Activated T-helper 1 cell treated with anti-CD3 and anti-CD28 coated beads, Interleukin-12 subunit alpha, Interleukin-12 subunit beta, Interleukin-2, Interleukin-4 antibody, amounts not matched to agents 30 ng/mL and 10 ng/mL and 1 ng/mL, durations not matched to agents 14 hours and 24 hours and 36 hours (primary cell): ENCODE measurements at regions of chr11 and their contacts with region 1.

Region 1: GRCh38 chr11:86218125-86219084 is 26.1 kb upstream of the EED start:
- DNase-seq: peak; percentile 42
- H3K4me3 Mint-ChIP-seq: peak overlapping the region; percentile 40
- H3K27ac Mint-ChIP-seq: peak overlapping the region; percentile 81
- H3K4me1 Mint-ChIP-seq: peaks cover 81% of the 10 kb centered on the region
- H3K27me3 Mint-ChIP-seq: no peaks in the 10 kb centered on the region

Region 2: DNA sequence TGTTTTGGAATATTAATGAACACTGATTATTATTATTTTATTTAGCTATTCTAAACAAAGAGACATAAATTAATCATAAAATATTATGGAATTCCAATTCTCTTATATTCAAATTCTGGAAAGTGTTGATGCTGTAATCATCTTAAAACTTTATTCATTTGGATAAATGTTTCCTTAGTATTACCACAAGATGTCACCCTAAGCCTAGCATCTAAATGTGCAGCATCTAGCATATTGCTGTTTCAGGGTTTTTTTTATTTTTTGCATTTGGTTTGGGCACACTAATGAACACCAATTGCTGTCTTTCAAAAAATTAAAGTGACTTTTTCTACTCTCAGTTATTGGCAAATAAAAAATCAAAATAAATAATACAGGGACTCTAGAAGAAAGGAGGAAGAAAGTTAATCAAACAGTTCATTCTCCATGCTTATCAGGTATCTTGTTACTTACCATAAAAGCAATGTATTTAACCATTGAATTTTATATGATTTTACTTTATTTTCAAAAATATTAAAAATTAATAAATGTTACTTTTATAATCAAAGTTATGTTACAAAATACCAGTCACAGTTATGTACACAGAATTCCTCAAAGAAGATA is 623.0 kb before region 1 on chr11:
- intact Hi-C with region 1: loop called (anchors 10 kb)
- DNase-seq: no peak
- H3K4me3 Mint-ChIP-seq: no peak overlapping the region
- H3K27ac Mint-ChIP-seq: no peak overlapping the region
- H3K4me1 Mint-ChIP-seq: no peaks in the 10 kb centered on the region
- H3K27me3 Mint-ChIP-seq: peaks cover 6% of the 10 kb centered on the region

Region 3: GRCh38 chr11:85766721-85767161 is 451.7 kb before region 1 on chr11:
- intact Hi-C with region 1: loop called (anchors 5 kb)
- DNase-seq: no peak
- H3K4me3 Mint-ChIP-seq: no peak overlapping the region
- H3K27ac Mint-ChIP-seq: no peak overlapping the region
- H3K4me1 Mint-ChIP-seq: peaks cover 84% of the 10 kb centered on the region
- H3K27me3 Mint-ChIP-seq: no peaks in the 10 kb centered on the region

Region 4: GRCh38 chr11:86041975-86042378 is 176.4 kb before region 1 on chr11:
- intact Hi-C with region 1: loop called (anchors 1 kb)
- DNase-seq: peak; percentile 48
- H3K4me3 Mint-ChIP-seq: peak overlapping the region; percentile 43
- H3K27ac Mint-ChIP-seq: peak overlapping the region; percentile 71
- H3K4me1 Mint-ChIP-seq: peaks cover 63% of the 10 kb centered on the region
- H3K27me3 Mint-ChIP-seq: no peaks in the 10 kb centered on the region

Region 5: DNA sequence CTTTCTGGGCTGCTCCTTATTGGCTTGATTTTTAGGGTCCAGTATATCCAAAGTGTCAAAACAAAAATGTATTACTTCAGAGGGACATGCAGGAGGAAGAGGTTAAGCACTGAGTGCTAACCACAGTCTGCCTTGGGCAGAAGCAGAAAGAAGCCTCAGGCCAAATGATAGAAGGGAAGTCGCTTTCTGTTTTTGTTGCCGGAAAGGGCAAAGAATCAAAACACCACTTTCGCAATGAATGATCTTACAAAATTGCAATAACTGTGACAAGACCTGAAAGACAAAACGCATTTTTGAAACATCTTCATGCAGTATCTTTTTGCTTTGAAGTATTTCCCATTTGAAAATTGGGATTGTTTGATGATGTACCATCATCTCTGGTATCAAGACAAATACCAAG is 79.4 kb before region 1 on chr11:
- intact Hi-C with region 1: loop called (anchors 2 kb)
- DNase-seq: peak; percentile 37
- H3K4me3 Mint-ChIP-seq: peak overlapping the region; percentile 57
- H3K27ac Mint-ChIP-seq: peak overlapping the region; percentile 81
- H3K4me1 Mint-ChIP-seq: peaks cover 75% of the 10 kb centered on the region
- H3K27me3 Mint-ChIP-seq: no peaks in the 10 kb centered on the region

Region 6: GRCh38 chr11:86202013-86202336 is 16.4 kb before region 1 on chr11:
- intact Hi-C with region 1: loop called (anchors 1 kb)
- DNase-seq: no peak
- H3K4me3 Mint-ChIP-seq: no peak overlapping the region
- H3K27ac Mint-ChIP-seq: no peak overlapping the region
- H3K4me1 Mint-ChIP-seq: peaks cover 21% of the 10 kb centered on the region
- H3K27me3 Mint-ChIP-seq: no peaks in the 10 kb centered on the region

Region 7: GRCh38 chr11:86244522-86245368 is 26.3 kb after region 1 on chr11 and contains the start of gene EED:
- intact Hi-C with region 1: loop called (anchors 1 kb)
- DNase-seq: peak; percentile 93
- H3K4me3 Mint-ChIP-seq: no peak within 1 kb of the TSS
- H3K27ac Mint-ChIP-seq: no peak within 1 kb of the TSS
- H3K4me1 Mint-ChIP-seq: peaks cover 43% of the 10 kb centered on the region
- H3K27me3 Mint-ChIP-seq: no peaks in the 10 kb centered on the region
- total RNA-seq, gene EED: 279 and 294 TPM in 2 replicates